Dorsolateral prefrontal cortex (tissue), 120 donors: ENCODE measurements at regions of chr12 and their contacts with region 1.

Region 1: DNA sequence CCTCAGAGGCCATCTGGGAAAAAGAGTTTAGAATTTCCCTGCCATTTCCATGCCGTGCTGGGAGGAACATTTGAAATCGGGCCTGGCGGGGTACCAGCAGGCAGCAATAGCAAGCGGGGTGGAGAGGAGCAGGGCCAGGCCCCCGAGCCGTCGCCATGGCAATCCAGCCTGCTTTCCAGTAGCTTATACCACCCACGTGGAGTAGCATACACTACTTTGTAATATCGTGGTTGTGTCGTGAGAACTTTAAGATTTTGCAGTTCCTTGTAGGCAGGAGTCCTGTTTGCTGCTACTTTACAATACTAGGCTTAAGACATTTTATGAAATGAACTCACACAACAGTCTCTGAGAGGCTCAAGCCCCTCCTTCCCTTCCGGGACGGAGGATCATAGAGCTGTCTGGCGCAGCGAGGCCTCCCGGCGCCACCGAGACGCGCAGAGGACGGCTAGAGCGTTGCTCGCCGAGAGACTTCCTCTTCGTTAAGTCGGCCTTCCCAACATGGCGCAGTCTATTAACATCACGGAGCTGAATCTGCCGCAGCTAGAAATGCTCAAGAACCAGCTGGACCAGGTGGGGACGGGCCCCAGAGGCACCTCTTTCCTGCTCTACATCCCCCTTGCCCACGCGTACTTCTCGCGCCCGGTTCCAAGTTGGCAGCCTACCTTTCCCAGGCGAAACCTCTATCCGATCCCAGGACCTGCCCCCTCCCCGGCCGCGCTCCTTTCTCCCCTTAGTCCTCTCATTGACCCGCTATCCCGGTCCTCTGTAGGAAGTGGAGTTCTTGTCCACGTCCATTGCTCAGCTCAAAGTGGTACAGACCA is at the start of gene PFDN5:
- DNase-seq: peak; percentile 70 to 92 (median 92)
- H3K4me3 ChIP-seq: peak within 1 kb of the TSS; percentile 62 to 99 (median 88)
- H3K27ac ChIP-seq: peak within 1 kb of the TSS; percentile 27 to 96 (median 87)
- H3K27me3 ChIP-seq: no peaks in the 10 kb centered on the region
- CTCF ChIP-seq: peak in 53 of 56 donors; percentile 11 to 65 (median 42)
- total RNA-seq, gene PFDN5: 256 to 374 (median 306) TPM

Region 2: DNA sequence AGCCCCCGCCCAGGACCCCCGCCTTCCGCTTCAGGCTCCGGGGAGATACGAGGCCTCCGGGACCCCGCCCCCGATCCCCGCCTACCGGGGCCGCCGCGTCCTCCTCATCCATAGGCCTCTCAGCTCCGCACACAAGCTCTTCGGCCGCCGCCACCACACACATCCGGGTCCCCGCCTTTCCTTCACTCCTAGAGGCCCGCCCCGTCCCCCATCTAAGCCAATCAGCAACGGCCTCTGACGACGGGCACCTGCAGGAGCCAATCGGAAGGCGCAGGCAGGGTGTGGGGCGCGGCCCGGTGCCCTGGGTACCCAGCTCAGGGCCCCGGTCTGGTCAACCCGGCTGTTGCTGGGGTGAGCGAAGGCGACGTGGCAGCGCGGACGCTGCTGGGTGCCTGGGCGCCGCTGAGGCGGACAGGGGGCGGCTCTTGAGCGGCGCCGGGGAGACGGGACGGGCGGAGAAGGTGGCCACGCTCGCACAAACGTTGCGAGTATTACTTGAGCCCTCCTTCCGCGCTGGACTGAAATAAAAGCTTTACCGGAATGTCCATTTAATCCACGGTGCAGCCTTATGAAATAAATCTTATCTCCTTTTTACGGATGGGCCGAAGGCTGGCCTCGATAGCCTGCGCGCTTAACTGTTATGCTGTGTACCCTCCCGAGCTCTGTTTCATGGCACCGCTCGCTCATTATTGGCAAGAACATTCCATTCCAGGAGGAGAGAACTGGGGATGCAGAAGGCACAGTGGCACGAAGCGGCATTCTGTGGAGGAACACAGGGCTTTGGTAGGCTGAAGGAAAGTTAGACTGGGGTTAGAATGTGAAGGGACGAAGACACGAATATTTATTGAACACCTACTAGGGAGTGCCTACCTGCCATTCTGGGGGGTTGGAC is 215.8 kb before region 1 on chr12 and contains the start of gene SPRYD3:
- intact Hi-C with region 1: loop called in 1 of 2 experiments (anchors 10 kb)
- DNase-seq: peak; percentile 96 to 100 (median 98)
- H3K4me3 ChIP-seq: peak within 1 kb of the TSS; percentile 53 to 98 (median 89)
- H3K27ac ChIP-seq: peak within 1 kb of the TSS; percentile 35 to 98 (median 92)
- H3K27me3 ChIP-seq: no peaks in the 10 kb centered on the region
- CTCF ChIP-seq: peak in 25 of 56 donors; percentile 4 to 59 (median 26)
- total RNA-seq, gene SPRYD3: 74.6 to 263 (median 181) TPM

Region 3: DNA sequence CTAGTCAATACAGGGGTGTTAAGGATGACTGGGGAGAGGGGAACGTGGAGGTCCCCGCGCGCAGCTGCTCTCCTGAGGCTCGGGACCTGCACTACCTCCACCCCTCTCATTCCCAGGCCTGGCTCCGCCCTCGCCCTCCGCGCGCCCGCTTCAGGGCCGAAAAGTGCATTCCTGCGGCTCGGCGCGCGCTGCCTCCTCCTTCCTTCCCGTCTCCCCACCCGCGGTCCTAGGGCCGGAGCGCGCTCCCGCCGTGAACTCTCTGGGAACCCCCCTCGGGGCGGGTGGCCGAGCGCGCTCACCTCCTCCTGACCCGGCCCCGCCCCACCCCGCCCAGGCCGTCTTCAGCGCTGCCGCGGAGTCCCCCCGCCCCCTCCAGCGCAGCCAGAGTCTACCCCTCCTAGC is 74.5 kb before region 1 on chr12:
- intact Hi-C with region 1: loop called in 1 of 2 experiments (anchors 2 kb)
- DNase-seq: peak in 9 of 10 donors; percentile 40 to 81 (median 68)
- H3K4me3 ChIP-seq: peak overlapping the region; percentile 54 to 87 (median 70)
- H3K27ac ChIP-seq: peak overlapping the region in 56 of 59 donors; percentile 39 to 98 (median 92)
- H3K27me3 ChIP-seq: no peaks in the 10 kb centered on the region
- CTCF ChIP-seq: peak in 2 of 56 donors; percentile 8 to 9

Region 4: GRCh38 chr12:53414756-53415417 is 119.6 kb after region 1 on chr12:
- intact Hi-C with region 1: no loop called
- DNase-seq: peak in 1 of 10 donors; percentile 14
- H3K4me3 ChIP-seq: no peak overlapping the region
- H3K27ac ChIP-seq: peak overlapping the region in 13 of 59 donors; percentile 2 to 75 (median 21)
- H3K27me3 ChIP-seq: no peaks in the 10 kb centered on the region
- CTCF ChIP-seq: no peak

Region 5: GRCh38 chr12:53806721-53807120 is 511.4 kb after region 1 on chr12:
- intact Hi-C with region 1: no loop called
- DNase-seq: no peak
- H3K4me3 ChIP-seq: no peak overlapping the region
- H3K27ac ChIP-seq: peak overlapping the region in 38 of 59 donors; percentile 1 to 78 (median 50)
- H3K27me3 ChIP-seq: peaks cover 0 to 10% (median 0%) of the 10 kb centered on the region in 45 donors
- CTCF ChIP-seq: no peak